H1 (cell line): ENCODE measurements at regions of chr19 and their contacts with region 1.

Region 1: DNA sequence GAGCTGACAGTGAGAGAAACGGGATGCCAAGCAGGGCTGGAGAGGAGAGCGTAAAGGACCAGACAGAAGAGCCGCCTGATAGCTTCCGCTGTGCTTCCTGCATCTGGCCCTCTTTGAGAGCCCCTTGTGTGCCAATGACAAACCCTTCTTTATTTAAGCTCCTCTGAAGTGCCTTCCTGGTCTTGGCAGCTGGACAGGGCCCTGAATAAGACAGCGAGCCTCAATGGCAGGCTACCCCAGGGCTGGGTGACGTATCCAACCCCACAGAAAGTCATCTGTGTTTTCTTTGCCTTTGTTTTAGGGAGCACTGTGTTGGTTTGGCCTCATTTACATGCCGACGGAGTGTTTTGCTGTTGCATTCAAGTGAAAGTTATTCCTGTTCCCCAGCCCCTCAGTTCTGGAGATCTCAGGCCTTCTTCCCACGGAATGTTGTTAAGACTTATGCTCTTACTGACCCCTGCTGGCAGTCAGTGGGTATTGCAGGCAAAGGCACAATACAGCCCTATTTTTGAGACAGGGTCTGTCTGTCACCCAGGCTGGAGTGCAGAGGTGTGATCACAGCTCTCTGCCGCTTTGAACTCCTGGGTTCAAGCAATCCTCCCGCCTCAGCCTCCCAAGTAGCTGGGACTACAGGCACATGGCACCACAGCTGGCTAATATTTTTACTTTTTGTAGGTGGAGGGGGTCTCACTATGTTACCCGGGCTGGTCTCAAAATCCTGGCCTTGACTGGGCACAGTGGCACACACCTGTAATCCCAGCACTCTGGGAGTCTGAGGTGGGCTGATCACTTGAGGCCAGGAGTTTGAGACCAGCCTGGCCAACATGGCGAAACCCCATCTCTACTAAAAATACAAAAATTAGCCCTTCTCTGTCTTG is 16.8 kb downstream of the CCL25 start:
- DNase-seq: peak; percentile 53 to 80
- H3K4me3 ChIP-seq: no peak overlapping the region
- H3K27ac ChIP-seq: no peak overlapping the region
- H3K4me1 ChIP-seq: no peaks in the 10 kb centered on the region
- H3K27me3 ChIP-seq: no peaks in the 10 kb centered on the region
- CTCF ChIP-seq: peak; percentile 59 to 93 (median 72)
- EP300 ChIP-seq: no peak
- POLR2A ChIP-seq: no peak
- RAD21 ChIP-seq: peak; percentile 82 to 83

Region 2: GRCh38 chr19:7928736-7929701 is 140.3 kb before region 1 on chr19:
- CTCF ChIA-PET with region 1: interaction called, 11 read pairs
- POLR2A ChIA-PET with region 1: no interaction called
- DNase-seq: peak in 1 of 2 experiments; percentile 90
- H3K4me3 ChIP-seq: no peak overlapping the region
- H3K27ac ChIP-seq: no peak overlapping the region
- H3K4me1 ChIP-seq: peaks cover 0 to 8% (median 2%) of the 10 kb centered on the region in 4 experiments; a peak in 5 of 7 replicates
- H3K27me3 ChIP-seq: no peaks in the 10 kb centered on the region
- CTCF ChIP-seq: peak; percentile 49 to 71 (median 69); a peak in 3 of 4 replicates
- EP300 ChIP-seq: no peak
- POLR2A ChIP-seq: peak in 1 of 2 experiments; percentile 38; a peak in 1 of 3 replicates
- RAD21 ChIP-seq: peak; percentile 50 to 65

Region 3: GRCh38 chr19:7970716-7971448 is 98.5 kb before region 1 on chr19:
- CTCF ChIA-PET with region 1: interaction called, 26 read pairs
- POLR2A ChIA-PET with region 1: interaction called, 3 read pairs
- DNase-seq: peak; percentile 34 to 85
- H3K4me3 ChIP-seq: no peak overlapping the region
- H3K27ac ChIP-seq: no peak overlapping the region; the same call in 1 of the 2 replicates
- H3K4me1 ChIP-seq: peaks cover 0 to 10% (median 9%) of the 10 kb centered on the region in 4 experiments; a peak in 6 of 7 replicates
- H3K27me3 ChIP-seq: no peaks in the 10 kb centered on the region
- CTCF ChIP-seq: peak; percentile 86 to 98 (median 96)
- EP300 ChIP-seq: no peak
- POLR2A ChIP-seq: no peak
- RAD21 ChIP-seq: peak; percentile 86

Region 4: DNA sequence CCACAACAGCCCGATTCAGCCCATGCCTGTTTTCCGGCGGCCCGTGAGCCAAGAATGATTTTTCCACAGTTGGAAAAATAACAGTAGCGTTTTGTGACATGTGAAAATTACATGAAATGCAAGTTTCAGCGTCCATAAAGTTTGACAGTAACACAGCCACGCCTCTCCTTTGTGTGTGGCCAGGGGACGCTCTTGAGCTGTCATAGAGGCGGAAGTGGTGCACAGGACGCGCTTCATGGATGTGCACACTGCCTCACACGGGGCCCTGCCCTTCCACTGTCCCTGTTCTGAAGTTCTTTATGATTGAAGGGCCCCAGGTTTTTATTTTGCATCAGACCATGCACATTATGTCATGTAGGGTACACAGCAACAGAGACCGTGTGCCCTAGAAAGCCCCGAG is 51.5 kb before region 1 on chr19:
- CTCF ChIA-PET with region 1: interaction called, 14 read pairs
- POLR2A ChIA-PET with region 1: no interaction called
- DNase-seq: no peak
- H3K4me3 ChIP-seq: no peak overlapping the region
- H3K27ac ChIP-seq: no peak overlapping the region
- H3K4me1 ChIP-seq: no peaks in the 10 kb centered on the region
- H3K27me3 ChIP-seq: no peaks in the 10 kb centered on the region
- CTCF ChIP-seq: peak; percentile 53 to 77 (median 63)
- EP300 ChIP-seq: no peak
- POLR2A ChIP-seq: no peak
- RAD21 ChIP-seq: peak; percentile 81

Region 5: DNA sequence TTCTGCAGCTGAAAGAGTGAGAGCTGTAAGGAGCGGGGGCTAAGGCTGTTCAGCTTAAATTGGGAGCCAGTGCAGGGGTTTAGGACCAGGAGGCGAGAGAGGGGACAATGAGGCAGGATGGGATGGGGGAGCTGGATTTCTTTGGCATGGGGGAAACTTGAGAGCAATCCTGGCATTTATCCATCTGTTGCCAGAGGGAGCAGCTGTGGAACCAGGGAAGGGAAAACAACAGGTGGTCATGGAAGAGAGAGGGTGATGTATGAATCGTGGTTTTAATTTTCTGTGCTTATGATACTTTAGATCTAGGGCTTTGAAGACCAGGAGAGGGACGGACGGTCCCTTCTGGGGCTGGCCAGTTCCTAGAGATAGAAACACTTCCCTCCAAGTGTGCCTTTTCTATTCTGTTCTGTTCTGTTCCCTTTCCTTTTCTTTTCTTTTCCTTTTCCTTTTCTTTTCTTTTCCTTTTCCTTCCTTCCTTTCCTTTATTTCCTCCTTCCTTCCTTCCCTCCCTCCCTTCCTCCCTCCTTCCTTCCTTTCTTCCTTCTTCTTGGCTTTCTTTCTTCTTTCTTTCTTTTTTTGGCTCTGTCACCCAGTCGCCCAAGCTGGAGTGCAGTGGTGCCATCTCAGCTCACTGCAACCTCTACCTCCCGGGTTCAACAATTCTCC is 32.8 kb before region 1 on chr19:
- CTCF ChIA-PET with region 1: interaction called, 21 read pairs
- POLR2A ChIA-PET with region 1: no interaction called
- DNase-seq: no peak
- H3K4me3 ChIP-seq: no peak overlapping the region
- H3K27ac ChIP-seq: no peak overlapping the region; the same call in 1 of the 2 replicates
- H3K4me1 ChIP-seq: peaks cover 0 to 11% (median 6%) of the 10 kb centered on the region in 4 experiments; a peak in 3 of 7 replicates
- H3K27me3 ChIP-seq: no peaks in the 10 kb centered on the region; a peak in 1 of 7 replicates
- CTCF ChIP-seq: no peak
- EP300 ChIP-seq: no peak
- POLR2A ChIP-seq: no peak
- RAD21 ChIP-seq: no peak

Region 6: GRCh38 chr19:8085598-8086408 is 16.5 kb after region 1 on chr19:
- CTCF ChIA-PET with region 1: interaction called, 14 read pairs
- POLR2A ChIA-PET with region 1: interaction called, 5 read pairs
- DNase-seq: no peak
- H3K4me3 ChIP-seq: no peak overlapping the region
- H3K27ac ChIP-seq: no peak overlapping the region
- H3K4me1 ChIP-seq: no peaks in the 10 kb centered on the region; a peak in 1 of 7 replicates
- H3K27me3 ChIP-seq: no peaks in the 10 kb centered on the region
- CTCF ChIP-seq: no peak
- EP300 ChIP-seq: no peak
- POLR2A ChIP-seq: no peak
- RAD21 ChIP-seq: no peak

Region 7: GRCh38 chr19:8158411-8159074 is 89.2 kb after region 1 on chr19:
- CTCF ChIA-PET with region 1: no interaction called
- POLR2A ChIA-PET with region 1: no interaction called
- DNase-seq: no peak
- H3K4me3 ChIP-seq: no peak overlapping the region
- H3K27ac ChIP-seq: no peak overlapping the region
- H3K4me1 ChIP-seq: peaks cover 0 to 3% (median 0%) of the 10 kb centered on the region in 4 experiments; a peak in 2 of 7 replicates
- H3K27me3 ChIP-seq: no peaks in the 10 kb centered on the region
- CTCF ChIP-seq: peak; percentile 36 to 89 (median 85)
- EP300 ChIP-seq: no peak
- POLR2A ChIP-seq: no peak
- RAD21 ChIP-seq: peak; percentile 95 to 97

Region 8: GRCh38 chr19:8307965-8308866 is 238.9 kb after region 1 on chr19 and contains the start of gene CD320:
- CTCF ChIA-PET with region 1: no interaction called
- POLR2A ChIA-PET with region 1: no interaction called
- DNase-seq: peak in 1 of 2 experiments; percentile 92
- H3K4me3 ChIP-seq: peak within 1 kb of the TSS; percentile 63 to 89 (median 82)
- H3K27ac ChIP-seq: peak within 1 kb of the TSS; percentile 80
- H3K4me1 ChIP-seq: peaks cover 0 to 15% (median 7%) of the 10 kb centered on the region in 4 experiments; a peak in 6 of 7 replicates
- H3K27me3 ChIP-seq: no peaks in the 10 kb centered on the region
- CTCF ChIP-seq: no peak
- EP300 ChIP-seq: no peak
- POLR2A ChIP-seq: peak; percentile 80 to 95
- RAD21 ChIP-seq: no peak
- total RNA-seq, gene CD320: 80.4 and 82.6 TPM in 2 replicates